B cell (primary cell): ENCODE measurements at regions of chr16 and their contacts with region 1.

Region 1: GRCh38 chr16:3129137-3130131 is 5.4 kb upstream of the ZNF213 start:
- DNase-seq: peak; percentile 92
- ATAC-seq: peak; percentile 73
- H3K4me3 ChIP-seq: peak overlapping the region; percentile 45 to 85 (median 67)
- H3K4me3 Mint-ChIP-seq: peak overlapping the region; percentile 92
- H3K27ac ChIP-seq: peak overlapping the region; percentile 5 to 56
- H3K27ac Mint-ChIP-seq: peak overlapping the region; percentile 87
- H3K4me1 ChIP-seq: peaks cover 24 to 37% of the 10 kb centered on the region in 2 donors
- H3K4me1 Mint-ChIP-seq: peaks cover 44% of the 10 kb centered on the region
- H3K27me3 ChIP-seq: no peaks in the 10 kb centered on the region
- H3K27me3 Mint-ChIP-seq: no peaks in the 10 kb centered on the region
- CTCF ChIP-seq: peak; percentile 80

Region 2: DNA sequence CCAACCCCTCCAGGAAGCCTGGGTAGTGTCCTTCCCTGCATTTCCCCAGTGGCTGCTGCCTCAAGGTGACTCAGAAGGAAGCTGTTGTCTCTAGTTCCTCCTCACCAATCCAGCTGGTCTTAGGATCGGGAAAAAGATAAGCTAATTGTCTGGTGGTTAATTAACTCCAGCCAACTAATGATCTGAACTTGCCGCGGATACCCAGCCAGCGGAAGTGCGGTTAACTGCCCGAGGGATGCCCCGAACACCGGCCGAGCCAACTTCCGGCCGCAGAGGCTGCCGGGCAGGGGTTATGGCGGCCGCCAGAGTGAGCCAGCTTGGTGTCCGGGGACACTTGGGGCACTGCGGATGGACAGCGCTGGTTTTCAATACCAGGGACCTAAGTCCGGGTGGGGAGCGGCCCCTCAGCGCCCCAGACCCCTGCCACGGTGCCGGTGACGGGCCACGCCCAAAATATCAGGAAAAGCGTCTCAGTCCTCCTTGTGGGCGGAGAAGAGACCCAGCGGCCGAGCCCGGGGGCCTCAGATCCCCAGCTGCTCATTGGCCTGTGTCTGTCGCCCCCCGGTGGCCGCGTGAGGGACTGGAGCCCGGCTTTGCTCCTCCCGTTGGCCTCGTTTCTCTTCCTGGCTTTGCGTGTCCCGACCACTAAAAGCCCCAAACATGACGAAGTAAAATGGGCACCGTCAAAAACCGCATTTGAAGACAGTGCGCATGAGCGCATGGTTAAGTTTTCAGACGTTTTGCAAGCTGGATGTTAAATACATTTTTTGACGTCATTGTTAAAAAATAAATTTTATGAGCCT is 261.2 kb before region 1 on chr16:
- CTCF ChIA-PET with region 1: no interaction called
- POLR2A ChIA-PET with region 1: no interaction called
- intact Hi-C with region 1: no loop called
- DNase-seq: peak; percentile 94
- ATAC-seq: peak; percentile 95
- H3K4me3 ChIP-seq: peak overlapping the region; percentile 47 to 83 (median 71)
- H3K4me3 Mint-ChIP-seq: peak overlapping the region; percentile 94
- H3K27ac ChIP-seq: peak overlapping the region; percentile 78 to 85
- H3K27ac Mint-ChIP-seq: peak overlapping the region; percentile 92
- H3K4me1 ChIP-seq: peaks cover 0 to 10% of the 10 kb centered on the region in 2 donors
- H3K4me1 Mint-ChIP-seq: peaks cover 9% of the 10 kb centered on the region
- H3K27me3 ChIP-seq: peaks cover 0 to 3% (median 0%) of the 10 kb centered on the region in 4 experiments
- H3K27me3 Mint-ChIP-seq: peaks cover 17% of the 10 kb centered on the region
- CTCF ChIP-seq: peak; percentile 97

Region 3: GRCh38 chr16:2911580-2912329 is 217.7 kb before region 1 on chr16 and contains the start of gene FLYWCH1:
- CTCF ChIA-PET with region 1: no interaction called
- POLR2A ChIA-PET with region 1: no interaction called
- intact Hi-C with region 1: no loop called
- DNase-seq: peak; percentile 98
- ATAC-seq: peak; percentile 99
- H3K4me3 ChIP-seq: peak within 1 kb of the TSS; percentile 50 to 77 (median 70)
- H3K4me3 Mint-ChIP-seq: peak within 1 kb of the TSS; percentile 96
- H3K27ac ChIP-seq: peak within 1 kb of the TSS; percentile 38 to 66
- H3K27ac Mint-ChIP-seq: peak within 1 kb of the TSS; percentile 92
- H3K4me1 ChIP-seq: peaks cover 11 to 18% of the 10 kb centered on the region in 2 donors
- H3K4me1 Mint-ChIP-seq: peaks cover 29% of the 10 kb centered on the region
- H3K27me3 ChIP-seq: no peaks in the 10 kb centered on the region
- H3K27me3 Mint-ChIP-seq: no peaks in the 10 kb centered on the region
- CTCF ChIP-seq: no peak
- total RNA-seq, gene FLYWCH1: 119 and 120 TPM in 2 replicates

Region 4: DNA sequence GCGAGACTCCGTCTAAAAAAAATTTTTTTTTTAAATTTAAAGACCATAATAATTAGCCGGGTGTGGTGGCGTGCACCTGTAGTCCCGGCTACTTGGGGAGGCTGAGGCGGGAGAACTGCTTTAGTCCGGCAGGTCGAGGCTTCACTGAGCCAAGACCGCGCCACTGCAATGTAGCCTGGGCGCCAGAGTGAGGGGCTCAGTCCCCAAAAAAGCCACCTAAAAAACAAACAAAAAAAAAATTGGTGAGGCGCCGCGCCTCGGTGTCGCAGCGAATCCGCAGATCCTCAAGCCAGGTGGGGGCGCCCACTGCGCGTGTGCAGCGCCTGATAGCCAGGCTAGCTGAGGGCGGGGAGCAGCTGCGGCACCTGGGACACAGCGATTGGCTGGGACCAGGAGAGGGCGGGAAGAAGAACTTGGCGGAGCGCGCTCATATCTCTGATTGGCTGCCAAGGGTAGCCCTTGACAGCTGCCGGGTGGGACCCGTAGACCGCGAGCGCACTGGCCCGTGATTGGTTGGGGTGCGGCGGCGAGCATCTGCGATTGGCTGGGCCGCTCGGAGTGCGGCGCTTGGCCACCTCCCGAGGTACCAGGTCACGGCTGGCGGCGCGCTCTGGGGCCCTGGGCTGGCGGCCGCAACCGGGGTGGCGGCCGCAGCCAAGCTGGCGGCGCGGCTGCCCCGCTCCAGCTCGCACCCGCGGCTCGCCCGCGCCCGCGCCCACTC is 125.7 kb before region 1 on chr16:
- CTCF ChIA-PET with region 1: interaction called, 20 read pairs
- POLR2A ChIA-PET with region 1: no interaction called
- intact Hi-C with region 1: no loop called
- DNase-seq: peak; percentile 99
- ATAC-seq: peak; percentile 97
- H3K4me3 ChIP-seq: no peak overlapping the region
- H3K4me3 Mint-ChIP-seq: peak overlapping the region; percentile 85
- H3K27ac ChIP-seq: no peak overlapping the region
- H3K27ac Mint-ChIP-seq: peak overlapping the region; percentile 89
- H3K4me1 ChIP-seq: peaks cover 25 to 31% of the 10 kb centered on the region in 2 donors
- H3K4me1 Mint-ChIP-seq: peaks cover 25% of the 10 kb centered on the region
- H3K27me3 ChIP-seq: peaks cover 0 to 9% (median 4%) of the 10 kb centered on the region in 4 experiments
- H3K27me3 Mint-ChIP-seq: peaks cover 9% of the 10 kb centered on the region
- CTCF ChIP-seq: peak; percentile 57

Region 5: GRCh38 chr16:3074860-3075522 is 54.4 kb before region 1 on chr16:
- CTCF ChIA-PET with region 1: interaction called, 35 read pairs
- POLR2A ChIA-PET with region 1: no interaction called
- intact Hi-C with region 1: no loop called
- DNase-seq: peak; percentile 65
- ATAC-seq: peak; percentile 88
- H3K4me3 ChIP-seq: peak overlapping the region in 4 of 5 experiments; percentile 2 to 29 (median 12)
- H3K4me3 Mint-ChIP-seq: peak overlapping the region; percentile 77
- H3K27ac ChIP-seq: peak overlapping the region; percentile 32 to 74
- H3K27ac Mint-ChIP-seq: peak overlapping the region; percentile 89
- H3K4me1 ChIP-seq: peaks cover 39 to 41% of the 10 kb centered on the region in 2 donors
- H3K4me1 Mint-ChIP-seq: peaks cover 55% of the 10 kb centered on the region
- H3K27me3 ChIP-seq: no peaks in the 10 kb centered on the region
- H3K27me3 Mint-ChIP-seq: no peaks in the 10 kb centered on the region
- CTCF ChIP-seq: no peak

Region 6: GRCh38 chr16:3094289-3095027 is 35.0 kb before region 1 on chr16:
- CTCF ChIA-PET with region 1: interaction called, 238 read pairs
- POLR2A ChIA-PET with region 1: interaction called, 9 read pairs
- intact Hi-C with region 1: loop called (anchors 1 kb)
- DNase-seq: peak; percentile 68
- ATAC-seq: no peak
- H3K4me3 ChIP-seq: no peak overlapping the region
- H3K4me3 Mint-ChIP-seq: no peak overlapping the region
- H3K27ac ChIP-seq: no peak overlapping the region
- H3K27ac Mint-ChIP-seq: peak overlapping the region; percentile 34
- H3K4me1 ChIP-seq: peaks cover 9 to 12% of the 10 kb centered on the region in 2 donors
- H3K4me1 Mint-ChIP-seq: peaks cover 20% of the 10 kb centered on the region
- H3K27me3 ChIP-seq: peaks cover 0 to 3% (median 0%) of the 10 kb centered on the region in 4 experiments
- H3K27me3 Mint-ChIP-seq: no peaks in the 10 kb centered on the region
- CTCF ChIP-seq: peak; percentile 62

Region 7: DNA sequence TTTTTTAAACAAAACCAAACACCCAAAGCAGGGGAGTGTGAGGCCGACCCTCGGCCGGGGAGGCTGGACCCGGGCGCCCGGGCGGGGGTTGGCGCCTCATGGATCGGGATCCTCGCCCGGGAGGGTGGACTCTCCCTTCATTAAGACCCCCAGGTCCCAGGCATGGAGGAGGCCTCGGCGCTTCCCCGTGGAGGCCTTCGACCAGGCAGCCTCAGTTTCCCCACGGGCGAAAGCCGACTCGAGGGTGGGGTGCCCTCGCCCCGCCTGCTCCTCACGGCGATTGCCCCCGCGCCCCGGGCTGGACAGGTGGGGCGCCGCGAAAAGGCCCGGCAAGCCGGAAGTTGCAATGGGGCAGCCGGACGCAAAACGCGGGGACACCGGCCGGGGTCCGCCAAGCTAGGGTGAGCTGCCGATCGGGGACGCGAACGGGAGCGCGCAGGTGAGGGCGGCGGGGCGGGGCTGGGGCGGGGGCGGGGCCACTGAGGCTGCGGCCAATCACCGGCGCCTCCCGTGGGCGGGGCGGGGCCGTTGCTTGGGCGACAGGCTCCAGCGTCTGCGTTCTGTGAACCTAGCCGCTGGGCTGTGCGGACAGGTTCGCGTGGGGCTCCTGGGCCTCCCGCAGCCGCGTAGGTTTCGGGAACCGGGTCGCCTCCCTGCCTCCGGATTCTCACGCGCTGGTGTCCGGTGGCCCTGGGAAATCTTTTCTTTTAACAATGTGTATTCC is 23.1 kb before region 1 on chr16:
- CTCF ChIA-PET with region 1: interaction called, 238 read pairs
- POLR2A ChIA-PET with region 1: interaction called, 11 read pairs
- intact Hi-C with region 1: loop called (anchors 1 kb)
- DNase-seq: peak; percentile 92
- ATAC-seq: peak; percentile 95
- H3K4me3 ChIP-seq: peak overlapping the region; percentile 70 to 85 (median 78)
- H3K4me3 Mint-ChIP-seq: peak overlapping the region; percentile 82
- H3K27ac ChIP-seq: peak overlapping the region; percentile 77 to 78
- H3K27ac Mint-ChIP-seq: peak overlapping the region; percentile 70
- H3K4me1 ChIP-seq: peaks cover 15 to 24% of the 10 kb centered on the region in 2 donors
- H3K4me1 Mint-ChIP-seq: peaks cover 18% of the 10 kb centered on the region
- H3K27me3 ChIP-seq: peaks cover 0 to under 1% (median 0%) of the 10 kb centered on the region in 4 experiments
- H3K27me3 Mint-ChIP-seq: no peaks in the 10 kb centered on the region
- CTCF ChIP-seq: no peak

Region 8: GRCh38 chr16:3150346-3151218 is 21.1 kb after region 1 on chr16:
- CTCF ChIA-PET with region 1: interaction called, 42 read pairs
- POLR2A ChIA-PET with region 1: interaction called, 31 read pairs
- intact Hi-C with region 1: no loop called
- DNase-seq: peak; percentile 96
- ATAC-seq: peak; percentile 86
- H3K4me3 ChIP-seq: peak overlapping the region; percentile 58 to 87 (median 71)
- H3K4me3 Mint-ChIP-seq: peak overlapping the region; percentile 92
- H3K27ac ChIP-seq: peak overlapping the region; percentile 29 to 54
- H3K27ac Mint-ChIP-seq: peak overlapping the region; percentile 95
- H3K4me1 ChIP-seq: peaks cover 22 to 37% of the 10 kb centered on the region in 2 donors
- H3K4me1 Mint-ChIP-seq: peaks cover 28% of the 10 kb centered on the region
- H3K27me3 ChIP-seq: no peaks in the 10 kb centered on the region
- H3K27me3 Mint-ChIP-seq: no peaks in the 10 kb centered on the region
- CTCF ChIP-seq: no peak

Region 9: GRCh38 chr16:3165111-3165822 is 35.8 kb after region 1 on chr16:
- CTCF ChIA-PET with region 1: interaction called, 17 read pairs
- POLR2A ChIA-PET with region 1: no interaction called
- intact Hi-C with region 1: loop called (anchors 1 kb)
- DNase-seq: no peak
- ATAC-seq: no peak
- H3K4me3 ChIP-seq: peak overlapping the region in 4 of 5 experiments; percentile 25 to 57 (median 44)
- H3K4me3 Mint-ChIP-seq: peak overlapping the region; percentile 63
- H3K27ac ChIP-seq: peak overlapping the region; percentile 38 to 68
- H3K27ac Mint-ChIP-seq: peak overlapping the region; percentile 65
- H3K4me1 ChIP-seq: peaks cover 8 to 9% of the 10 kb centered on the region in 2 donors
- H3K4me1 Mint-ChIP-seq: peaks cover 10% of the 10 kb centered on the region
- H3K27me3 ChIP-seq: peaks cover 0 to 28% (median 11%) of the 10 kb centered on the region in 4 experiments
- H3K27me3 Mint-ChIP-seq: peaks cover 12% of the 10 kb centered on the region
- CTCF ChIP-seq: no peak